ENCODE measurements at regions of chr20 and their contacts with region 1.

Region 1: DNA sequence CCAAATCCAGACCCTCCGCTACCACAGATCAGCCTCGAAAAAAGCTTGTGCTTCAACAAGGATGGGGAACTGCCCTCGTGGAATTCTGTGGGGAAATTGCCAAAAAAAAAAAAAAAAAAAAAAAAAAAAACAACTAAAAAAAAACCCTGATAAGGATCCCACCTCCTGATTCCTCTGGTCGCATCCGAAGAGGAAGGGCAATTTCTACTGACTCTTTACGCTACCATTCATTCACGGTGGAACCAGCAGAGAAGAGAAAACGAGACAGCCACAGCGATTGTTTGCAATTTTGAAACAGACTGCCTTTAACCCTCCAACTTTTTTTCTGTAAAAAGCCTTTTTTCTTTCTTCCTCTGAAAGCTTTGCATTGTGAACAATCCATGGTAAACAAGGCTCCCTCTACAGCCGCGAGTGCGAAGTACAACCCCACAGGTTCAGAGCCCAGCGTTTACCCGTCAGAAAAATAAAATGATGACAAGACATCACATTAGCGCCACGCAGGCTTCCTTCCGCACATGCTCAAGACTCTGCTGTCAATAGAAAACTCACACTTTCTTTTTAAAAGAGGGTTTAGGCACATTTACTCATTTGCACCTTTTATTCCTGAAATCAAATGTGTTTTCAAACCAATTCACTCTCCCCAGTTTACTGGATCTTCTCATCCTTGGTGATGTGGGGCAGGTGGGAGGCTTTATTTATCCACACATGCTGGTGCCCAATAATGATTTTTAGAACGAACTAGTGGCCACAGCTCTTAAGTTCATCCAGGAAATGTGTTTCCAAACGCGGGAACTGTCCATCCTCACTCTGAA is 100.0 kb downstream of the NOL4L start:
- DNase-seq: peak; percentile 64
- H3K4me3 ChIP-seq: peak overlapping the region; percentile 87 to 93
- H3K27ac ChIP-seq: peak overlapping the region; percentile 85 to 92
- H3K4me1 ChIP-seq: peaks cover 6% of the 10 kb centered on the region
- H3K27me3 ChIP-seq: no peaks in the 10 kb centered on the region
- CTCF ChIP-seq: peak in 3 of 4 experiments; percentile 53 to 85 (median 75)
- POLR2A ChIP-seq: no peak

Region 2: DNA sequence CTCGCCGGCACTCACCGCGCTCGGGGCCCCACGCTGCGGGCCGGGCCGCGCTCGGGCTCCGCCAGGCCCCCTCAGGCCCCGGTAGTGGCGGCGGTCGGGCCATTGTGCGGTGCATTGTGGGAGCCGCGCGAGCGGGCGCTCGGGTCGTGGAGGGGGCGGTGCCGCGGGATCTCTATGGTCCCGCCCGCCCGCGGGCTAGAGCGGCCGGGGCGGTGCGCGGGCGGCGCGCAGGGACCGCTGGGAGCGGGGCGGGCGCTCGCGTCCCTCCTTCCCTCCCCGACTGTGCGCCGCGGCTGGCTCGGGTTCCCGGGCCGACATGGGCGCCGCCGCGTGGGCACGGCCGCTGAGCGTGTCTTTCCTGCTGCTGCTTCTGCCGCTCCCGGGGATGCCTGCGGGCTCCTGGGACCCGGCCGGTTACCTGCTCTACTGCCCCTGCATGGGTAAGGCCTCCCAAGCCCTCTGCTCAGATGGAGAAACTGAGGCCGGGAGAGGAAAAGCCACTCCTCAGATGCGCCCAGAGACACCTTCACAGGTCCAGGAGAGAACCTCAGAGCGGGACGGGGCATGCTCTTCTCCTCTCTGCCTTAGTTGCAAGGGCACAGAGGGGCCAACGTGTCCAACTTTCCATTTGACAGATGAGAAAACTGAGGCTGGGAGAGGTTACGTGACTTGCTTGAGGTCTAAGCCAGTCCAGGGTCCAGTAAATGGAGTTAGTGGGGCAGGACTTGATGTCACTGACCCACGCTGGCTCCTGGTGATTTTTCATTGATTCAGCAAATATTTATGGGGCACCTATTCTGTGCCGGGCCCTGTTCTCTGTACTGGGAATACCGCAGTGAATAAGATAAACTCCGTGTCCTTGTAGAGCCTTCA is 277.3 kb before region 1 on chr20 and contains the starts of genes PLAGL2 and POFUT1:
- intact Hi-C with region 1: loop called (anchors 10 kb)
- DNase-seq: peak; percentile 88
- H3K4me3 ChIP-seq: peak within 1 kb of the TSS; percentile 96 to 99
- H3K27ac ChIP-seq: peak within 1 kb of the TSS; percentile 94 to 97
- H3K4me1 ChIP-seq: peaks cover 30% of the 10 kb centered on the region
- H3K27me3 ChIP-seq: no peaks in the 10 kb centered on the region
- CTCF ChIP-seq: peak in 3 of 4 experiments; percentile 29 to 44 (median 36)
- POLR2A ChIP-seq: peak; percentile 88
- total RNA-seq, gene PLAGL2: 11.2 to 17.4 TPM
- total RNA-seq, gene POFUT1: 33.2 to 44.3 TPM

Region 3: DNA sequence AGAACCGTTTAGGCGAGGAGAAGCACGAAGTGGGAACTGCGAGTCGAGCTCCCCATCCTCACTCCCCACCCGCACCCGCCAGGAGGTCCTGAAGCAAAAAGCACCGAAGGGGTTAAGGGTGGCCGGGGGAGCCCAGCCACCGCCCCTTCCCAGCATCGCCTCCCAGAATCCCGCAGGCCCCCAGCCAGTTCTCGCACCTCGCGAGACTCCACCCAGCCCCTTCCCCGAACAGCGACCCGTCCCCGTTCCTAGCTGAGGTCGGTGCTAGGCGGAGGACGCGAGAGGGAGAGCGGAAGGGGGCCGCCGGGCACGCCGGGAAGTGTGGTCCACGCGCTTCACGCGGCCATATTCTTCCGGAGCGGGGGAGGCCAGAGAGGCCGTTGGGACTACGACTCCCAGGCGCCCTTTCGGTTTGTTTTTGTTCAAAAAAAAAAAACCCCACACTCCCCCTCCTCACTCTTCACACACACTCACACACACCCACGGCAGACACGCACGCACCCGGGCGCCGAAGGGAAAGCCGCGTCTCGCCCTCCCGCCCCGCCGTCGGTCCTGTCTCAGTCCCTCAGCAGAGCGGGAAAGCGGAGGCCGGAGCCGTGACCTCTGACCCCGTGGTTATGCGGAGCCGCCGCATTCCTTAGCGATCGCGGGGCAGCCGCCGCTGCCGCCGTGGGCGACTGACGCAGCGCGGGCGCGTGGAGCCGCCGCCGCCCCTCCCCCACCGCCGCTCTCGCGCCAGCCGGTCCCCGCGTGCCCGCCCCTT is 127.1 kb before region 1 on chr20 and contains the start of gene ASXL1:
- intact Hi-C with region 1: loop called (anchors 2 kb)
- DNase-seq: peak; percentile 96
- H3K4me3 ChIP-seq: peak within 1 kb of the TSS; percentile 73 to 80
- H3K27ac ChIP-seq: peak within 1 kb of the TSS; percentile 97
- H3K4me1 ChIP-seq: peaks cover 4% of the 10 kb centered on the region
- H3K27me3 ChIP-seq: no peaks in the 10 kb centered on the region
- CTCF ChIP-seq: peak in 2 of 4 experiments; percentile 15 to 28
- POLR2A ChIP-seq: peak; percentile 40
- total RNA-seq, gene ASXL1: 30.4 to 106 TPM

Region 4: DNA sequence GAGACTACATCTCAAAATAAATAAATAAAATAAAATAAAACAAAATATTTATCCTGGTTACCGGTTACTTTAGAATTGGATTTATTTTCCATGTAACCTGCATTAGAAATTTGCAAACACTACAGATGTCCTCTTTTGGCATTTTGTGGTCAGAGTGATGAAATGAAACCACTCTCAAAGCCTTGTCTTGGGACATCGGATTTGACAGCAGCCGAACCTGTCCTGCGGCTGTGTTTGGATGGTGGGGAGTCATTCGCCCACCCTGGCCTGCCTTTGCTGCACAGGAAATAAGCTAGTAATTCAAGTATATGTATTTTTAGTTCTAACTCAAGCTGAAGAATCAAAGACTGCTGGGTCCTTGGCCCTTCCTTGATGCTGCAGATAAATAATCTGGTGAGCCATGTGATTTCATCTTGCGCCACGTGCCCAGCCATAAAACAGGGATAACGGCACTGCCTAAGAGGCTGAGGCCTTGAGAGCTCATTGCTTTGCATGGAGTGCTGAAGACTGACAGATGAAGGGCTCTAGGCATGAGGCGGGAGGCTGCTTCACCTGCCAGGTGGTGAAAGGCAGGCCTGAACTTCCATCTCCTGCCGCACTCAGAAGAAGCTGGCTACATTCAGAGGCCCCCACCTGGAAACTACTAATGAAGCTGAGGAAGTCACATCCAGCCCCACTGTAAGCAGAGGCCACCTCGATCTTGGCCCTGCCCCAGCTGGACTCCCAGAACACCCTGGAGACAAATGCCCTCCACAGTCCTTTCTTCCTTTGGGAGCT is 23.0 kb after region 1 on chr20:
- intact Hi-C with region 1: no loop called
- DNase-seq: no peak
- H3K4me3 ChIP-seq: no peak overlapping the region
- H3K27ac ChIP-seq: no peak overlapping the region
- H3K4me1 ChIP-seq: no peaks in the 10 kb centered on the region
- H3K27me3 ChIP-seq: no peaks in the 10 kb centered on the region
- CTCF ChIP-seq: no peak
- POLR2A ChIP-seq: no peak

Measured in prostate gland (tissue), 2 donors.